ENCODE measurements at regions of chr22 and their contacts with region 1.

Region 1: DNA sequence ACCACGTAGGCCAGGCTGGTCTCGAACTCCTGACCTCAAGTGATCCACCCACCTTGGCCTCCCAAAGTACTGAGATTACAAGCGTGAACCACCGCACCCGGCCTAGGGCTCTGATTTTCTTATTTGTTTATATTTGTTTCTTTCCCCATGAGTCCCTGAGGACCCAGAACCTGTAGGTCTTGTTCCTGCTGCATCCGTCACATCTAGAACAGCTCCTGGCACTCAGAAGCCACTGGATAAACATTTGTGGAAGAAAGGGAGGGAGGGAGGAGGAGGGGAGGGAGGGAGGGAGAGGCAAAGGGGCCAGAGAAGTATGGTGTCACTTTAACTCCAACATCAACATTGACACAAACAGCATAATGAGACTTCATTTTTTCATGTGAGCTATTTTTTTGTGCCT is 67.7 kb downstream of the CELSR1 start:
- DNase-seq: peak; percentile 34
- ATAC-seq: no peak
- H3K4me3 ChIP-seq: no peak overlapping the region
- H3K27ac ChIP-seq: no peak overlapping the region
- H3K4me1 ChIP-seq: peaks cover 19% of the 10 kb centered on the region
- H3K27me3 ChIP-seq: peaks cover 6 to 20% of the 10 kb centered on the region in 2 experiments; a peak in 4 of 5 replicates
- CTCF ChIP-seq: no peak
- EP300 ChIP-seq: no peak
- POLR2A ChIP-seq: no peak
- RAD21 ChIP-seq: no peak

Region 2: DNA sequence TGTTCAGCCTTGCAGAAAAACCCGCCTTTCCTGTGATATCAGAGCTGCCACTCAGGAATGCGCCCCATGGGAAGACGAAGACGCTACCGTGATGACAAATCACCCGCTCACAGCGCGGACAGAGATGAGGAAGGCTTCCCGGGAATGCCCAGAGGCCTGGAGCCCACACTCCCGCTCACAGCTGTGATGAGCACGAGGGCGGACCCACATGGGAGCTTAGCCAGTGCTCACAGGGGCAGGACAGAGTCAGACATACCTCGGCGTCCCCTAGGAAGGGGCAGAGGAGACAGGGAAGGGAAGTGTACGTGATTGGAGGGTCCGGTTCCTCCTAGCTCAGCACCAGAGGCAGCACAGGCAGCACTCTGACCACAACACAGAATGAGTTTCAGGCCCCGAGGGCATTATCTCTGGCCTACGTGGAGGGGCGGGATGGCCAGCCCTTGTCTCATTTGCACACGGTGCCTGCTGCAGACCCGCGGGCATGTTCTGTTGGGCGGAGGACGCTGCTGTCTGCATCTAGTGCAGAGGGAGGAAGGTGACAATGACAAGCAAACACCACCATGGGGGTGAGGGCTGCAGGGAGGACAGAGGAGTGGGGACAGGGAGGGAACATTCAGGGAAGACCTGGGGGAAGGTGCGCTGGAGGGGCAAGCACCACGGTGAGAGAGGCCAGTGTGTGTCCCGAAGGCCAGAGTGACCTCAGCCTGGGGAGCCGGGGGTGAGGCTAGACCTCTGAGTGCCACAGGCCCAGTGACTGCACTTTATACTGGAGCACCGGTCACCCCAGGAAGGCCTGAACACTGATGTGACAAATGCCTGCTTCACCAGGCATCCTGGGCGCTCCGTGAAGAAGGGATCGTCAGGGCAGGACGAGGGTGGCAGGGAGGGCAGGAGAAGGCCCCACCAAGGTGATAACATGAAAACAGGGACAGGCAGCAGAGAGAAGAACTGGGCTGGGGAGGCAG is 11.9 kb before region 1 on chr22:
- CTCF ChIA-PET with region 1: no interaction called
- POLR2A ChIA-PET with region 1: interaction called, 11 read pairs
- in situ Hi-C with region 1: no loop called
- intact Hi-C with region 1: no loop called
- DNase-seq: no peak
- ATAC-seq: no peak
- H3K4me3 ChIP-seq: no peak overlapping the region
- H3K27ac ChIP-seq: no peak overlapping the region
- H3K4me1 ChIP-seq: peaks cover 75% of the 10 kb centered on the region
- H3K27me3 ChIP-seq: no peaks in the 10 kb centered on the region
- CTCF ChIP-seq: no peak
- EP300 ChIP-seq: no peak
- POLR2A ChIP-seq: no peak
- RAD21 ChIP-seq: no peak

Region 3: GRCh38 chr22:46484861-46485595 is 15.3 kb after region 1 on chr22:
- CTCF ChIA-PET with region 1: no interaction called
- POLR2A ChIA-PET with region 1: no interaction called
- in situ Hi-C with region 1: no loop called
- intact Hi-C with region 1: no loop called
- DNase-seq: no peak
- ATAC-seq: no peak
- H3K4me3 ChIP-seq: no peak overlapping the region
- H3K27ac ChIP-seq: no peak overlapping the region
- H3K4me1 ChIP-seq: peaks cover 8% of the 10 kb centered on the region
- H3K27me3 ChIP-seq: no peaks in the 10 kb centered on the region
- CTCF ChIP-seq: no peak
- EP300 ChIP-seq: no peak
- POLR2A ChIP-seq: no peak
- RAD21 ChIP-seq: no peak

Measured in HepG2 (cell line).